CD8-positive, alpha-beta T cell (primary cell): ENCODE measurements at regions of chr12 and their contacts with region 1.

Region 1: GRCh38 chr12:56636675-56637540 is 6.8 kb upstream of the BAZ2A start:
- DNase-seq: peak; percentile 91 to 99 (median 97)
- ATAC-seq: peak; percentile 71
- H3K4me3 ChIP-seq: peak overlapping the region; percentile 58 to 79
- H3K4me3 Mint-ChIP-seq: peak overlapping the region; percentile 98
- H3K27ac ChIP-seq: peak overlapping the region; percentile 79 to 87
- H3K27ac Mint-ChIP-seq: peak overlapping the region; percentile 97
- H3K4me1 ChIP-seq: peaks cover 45% of the 10 kb centered on the region
- H3K4me1 Mint-ChIP-seq: peaks cover 57% of the 10 kb centered on the region
- H3K27me3 ChIP-seq: no peaks in the 10 kb centered on the region
- H3K27me3 Mint-ChIP-seq: no peaks in the 10 kb centered on the region
- CTCF ChIP-seq: peak; percentile 71

Region 2: GRCh38 chr12:56359851-56360767 is 276.8 kb before region 1 on chr12 and contains the start of gene STAT2:
- CTCF ChIA-PET with region 1: no interaction called
- POLR2A ChIA-PET with region 1: no interaction called
- intact Hi-C with region 1: loop called in 1 of 2 experiments (anchors 2 kb)
- DNase-seq: peak; percentile 98 to 100 (median 99)
- ATAC-seq: peak; percentile 93
- H3K4me3 ChIP-seq: peak within 1 kb of the TSS; percentile 78 to 81
- H3K4me3 Mint-ChIP-seq: peak within 1 kb of the TSS; percentile 95
- H3K27ac ChIP-seq: peak within 1 kb of the TSS; percentile 76 to 78
- H3K27ac Mint-ChIP-seq: peak within 1 kb of the TSS; percentile 95
- H3K4me1 ChIP-seq: peaks cover 23% of the 10 kb centered on the region
- H3K4me1 Mint-ChIP-seq: peaks cover 34% of the 10 kb centered on the region
- H3K27me3 ChIP-seq: no peaks in the 10 kb centered on the region
- H3K27me3 Mint-ChIP-seq: no peaks in the 10 kb centered on the region
- CTCF ChIP-seq: no peak
- total RNA-seq, gene STAT2: 71.8 to 81.9 TPM

Region 3: DNA sequence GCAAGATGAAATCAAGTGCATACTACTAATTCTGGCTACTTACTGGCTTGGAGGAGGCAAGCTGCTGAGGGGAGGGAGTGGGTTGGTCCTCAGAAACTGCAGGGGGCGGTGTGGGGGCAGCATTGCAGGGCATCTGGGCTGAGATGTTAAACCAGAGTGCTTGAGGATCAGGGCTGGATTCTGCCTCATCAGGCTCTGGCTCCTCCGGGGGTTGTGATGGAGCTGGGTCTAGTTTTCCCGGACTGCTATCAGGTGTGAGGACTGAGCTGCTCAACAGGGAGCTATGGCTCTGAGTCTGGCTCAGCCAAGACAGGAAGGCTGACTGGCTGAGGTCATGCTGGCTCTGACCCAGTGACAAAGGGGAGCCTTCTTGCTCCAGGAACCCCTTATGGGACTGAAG is 35.4 kb before region 1 on chr12:
- CTCF ChIA-PET with region 1: interaction called, 12 read pairs
- POLR2A ChIA-PET with region 1: interaction called, 5 read pairs
- intact Hi-C with region 1: loop called (anchors 1 to 5 kb)
- DNase-seq: peak in 6 of 9 experiments; percentile 13 to 55 (median 42)
- ATAC-seq: peak; percentile 71
- H3K4me3 ChIP-seq: no peak overlapping the region
- H3K4me3 Mint-ChIP-seq: no peak overlapping the region
- H3K27ac ChIP-seq: no peak overlapping the region
- H3K27ac Mint-ChIP-seq: no peak overlapping the region
- H3K4me1 ChIP-seq: no peaks in the 10 kb centered on the region
- H3K4me1 Mint-ChIP-seq: no peaks in the 10 kb centered on the region
- H3K27me3 ChIP-seq: no peaks in the 10 kb centered on the region
- H3K27me3 Mint-ChIP-seq: no peaks in the 10 kb centered on the region
- CTCF ChIP-seq: no peak

Region 4: GRCh38 chr12:56724972-56725722 is 88.2 kb after region 1 on chr12 and contains the start of gene NACA:
- CTCF ChIA-PET with region 1: interaction called, 3 read pairs
- POLR2A ChIA-PET with region 1: interaction called, 19 read pairs
- intact Hi-C with region 1: loop called in 1 of 2 experiments (anchors 2 kb)
- DNase-seq: peak; percentile 94 to 99 (median 97)
- ATAC-seq: peak; percentile 95
- H3K4me3 ChIP-seq: peak within 1 kb of the TSS; percentile 70 to 88
- H3K4me3 Mint-ChIP-seq: peak within 1 kb of the TSS; percentile 99
- H3K27ac ChIP-seq: peak within 1 kb of the TSS; percentile 75 to 80
- H3K27ac Mint-ChIP-seq: peak within 1 kb of the TSS; percentile 96
- H3K4me1 ChIP-seq: peaks cover 45% of the 10 kb centered on the region
- H3K4me1 Mint-ChIP-seq: peaks cover 52% of the 10 kb centered on the region
- H3K27me3 ChIP-seq: no peaks in the 10 kb centered on the region
- H3K27me3 Mint-ChIP-seq: no peaks in the 10 kb centered on the region
- CTCF ChIP-seq: no peak
- total RNA-seq, gene NACA: 1,373 to 1,407 TPM

Region 5: DNA sequence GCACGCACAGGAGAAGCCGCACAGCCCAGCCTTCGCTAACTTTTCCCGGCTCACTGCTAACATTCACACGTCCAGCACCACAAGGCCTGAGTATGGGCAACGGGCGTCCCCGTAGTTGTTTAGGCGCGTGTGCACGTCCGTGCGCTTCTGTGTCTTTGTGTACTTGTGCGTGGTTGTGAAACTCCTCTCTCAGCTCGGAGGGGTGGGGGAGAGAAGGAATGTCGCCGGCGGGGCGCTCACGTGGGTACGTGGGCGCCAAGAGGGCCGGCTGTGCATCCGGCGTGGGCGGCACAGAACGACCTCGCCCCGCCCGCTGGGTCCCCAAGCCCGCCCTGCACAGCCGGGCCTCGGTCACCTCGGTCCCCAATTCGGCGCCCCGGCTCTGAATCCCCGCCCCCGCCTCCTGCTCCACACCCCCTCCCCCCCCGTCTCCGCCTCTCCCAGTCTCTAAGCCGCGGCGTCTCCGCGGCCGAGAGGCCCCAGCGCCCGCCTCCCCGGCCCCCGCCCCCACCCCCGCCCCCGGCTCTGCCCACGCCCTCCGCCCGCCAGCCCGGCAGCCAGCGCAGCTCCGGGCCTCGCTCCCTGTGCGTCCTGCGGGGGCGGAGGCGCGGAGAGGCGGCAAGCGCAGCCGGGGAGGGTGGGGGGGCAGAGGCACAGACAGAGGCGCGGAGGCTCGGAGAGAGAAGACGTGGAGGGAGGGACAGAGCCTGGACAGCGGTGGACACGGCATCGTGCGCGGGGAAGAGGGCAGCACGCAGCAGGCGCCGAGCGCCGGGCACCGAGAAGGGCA is 451.7 kb after region 1 on chr12 and contains the start of gene NAB2:
- CTCF ChIA-PET with region 1: no interaction called
- POLR2A ChIA-PET with region 1: no interaction called
- intact Hi-C with region 1: loop called (anchors 2 to 5 kb)
- DNase-seq: peak; percentile 87 to 97 (median 95)
- ATAC-seq: peak; percentile 60
- H3K4me3 ChIP-seq: peak within 1 kb of the TSS; percentile 87 to 95
- H3K4me3 Mint-ChIP-seq: peak within 1 kb of the TSS; percentile 92
- H3K27ac ChIP-seq: peak within 1 kb of the TSS; percentile 97 to 100
- H3K27ac Mint-ChIP-seq: peak within 1 kb of the TSS; percentile 95
- H3K4me1 ChIP-seq: peaks cover 47% of the 10 kb centered on the region
- H3K4me1 Mint-ChIP-seq: peaks cover 64% of the 10 kb centered on the region
- H3K27me3 ChIP-seq: no peaks in the 10 kb centered on the region
- H3K27me3 Mint-ChIP-seq: no peaks in the 10 kb centered on the region
- CTCF ChIP-seq: no peak
- total RNA-seq, gene NAB2: 5.9 to 6.7 TPM